ENCODE measurements at regions of chr2 and their contacts with region 1.

Region 1: GRCh38 chr2:164015328-164016123 is 279.7 kb upstream of the FIGN start:
- DNase-seq: no peak
- H3K4me3 ChIP-seq: no peak overlapping the region
- H3K27ac ChIP-seq: no peak overlapping the region
- H3K4me1 ChIP-seq: no peaks in the 10 kb centered on the region
- H3K27me3 ChIP-seq: no peaks in the 10 kb centered on the region
- CTCF ChIP-seq: no peak
- EP300 ChIP-seq: no peak
- POLR2A ChIP-seq: no peak

Region 2: DNA sequence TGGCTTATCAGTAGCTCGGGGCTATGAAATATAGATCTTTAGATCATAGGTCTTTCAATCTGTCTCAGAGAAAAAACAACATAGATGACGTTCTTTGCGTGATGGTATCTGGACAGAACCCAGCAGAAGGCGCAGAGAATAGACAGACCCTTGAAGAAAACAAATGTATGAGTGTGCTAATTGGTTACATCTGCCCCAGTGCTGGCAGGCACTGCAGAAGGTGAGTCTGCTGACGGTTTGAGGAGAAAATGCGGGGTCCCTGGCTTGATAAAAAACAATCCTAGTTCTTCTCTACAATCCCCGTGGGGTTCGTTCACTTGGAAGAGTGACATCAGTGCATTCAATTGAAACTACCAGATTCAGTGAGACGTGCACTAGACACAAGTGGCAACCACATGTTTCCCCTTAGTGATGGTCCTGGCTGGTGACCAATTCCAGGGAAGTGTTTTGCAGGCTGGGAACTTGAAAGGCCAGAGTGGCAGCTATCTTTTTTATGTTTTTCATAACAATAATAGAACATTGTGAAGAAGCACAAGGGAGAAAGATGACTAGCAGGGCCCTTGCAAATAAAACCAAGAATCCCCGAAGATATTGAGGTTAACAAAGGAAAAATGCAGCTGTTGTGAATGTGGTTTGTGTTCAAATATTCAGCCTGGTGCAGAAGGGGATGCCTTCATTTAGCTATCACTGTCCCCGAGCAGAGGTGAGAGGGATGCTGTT is 57.7 kb after region 1 on chr2:
- in situ Hi-C with region 1: no loop called
- intact Hi-C with region 1: loop called (anchors 2 kb)
- DNase-seq: no peak
- H3K4me3 ChIP-seq: no peak overlapping the region
- H3K27ac ChIP-seq: no peak overlapping the region
- H3K4me1 ChIP-seq: no peaks in the 10 kb centered on the region
- H3K27me3 ChIP-seq: no peaks in the 10 kb centered on the region
- CTCF ChIP-seq: no peak
- EP300 ChIP-seq: no peak
- POLR2A ChIP-seq: no peak

Measured in transverse colon (tissue), 4 donors.